Right ventricle myocardium superior (tissue), 1 donor: ENCODE measurements at regions of chr19 and their contacts with region 1.

Region 1: DNA sequence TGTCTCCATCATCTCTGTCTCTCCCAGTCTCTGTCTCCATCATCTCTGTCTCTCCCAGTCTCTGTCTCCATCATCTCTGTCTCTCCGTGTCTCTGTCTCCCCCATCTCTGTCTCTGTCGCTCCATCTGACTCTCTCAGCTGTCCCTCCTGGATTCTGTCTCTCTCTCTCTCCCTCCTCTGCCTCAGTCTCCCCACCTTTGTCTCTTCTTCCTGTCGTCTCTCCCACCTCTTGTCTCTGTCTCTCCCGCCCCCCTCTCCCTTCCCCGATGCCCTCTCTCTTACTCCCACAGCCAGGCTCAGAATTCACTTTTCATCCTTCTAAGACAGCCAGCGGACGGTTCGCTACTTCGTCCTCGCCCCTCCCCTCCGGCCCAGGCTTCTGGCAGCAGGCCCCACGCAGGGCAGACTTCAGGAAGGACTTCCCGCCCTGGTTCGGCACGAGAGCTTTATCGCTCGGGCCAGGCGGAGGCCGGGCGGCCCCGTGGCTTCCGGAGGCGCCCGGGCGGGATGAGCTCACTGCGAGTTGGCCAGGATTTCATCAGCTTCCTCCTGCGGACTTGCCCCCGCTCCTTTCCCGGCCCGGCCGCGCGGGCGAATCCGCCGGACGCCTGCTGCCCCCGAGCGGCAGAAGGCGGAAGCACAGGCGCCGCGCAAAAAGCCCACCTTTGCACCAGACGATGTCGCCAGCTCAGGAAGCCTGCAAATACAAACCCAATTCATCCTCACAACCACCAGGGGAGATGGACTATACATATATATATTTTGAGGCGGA is 12.4 kb upstream of the CCDC9 start:
- DNase-seq: peak; percentile 94
- ATAC-seq: peak; percentile 95

Region 2: DNA sequence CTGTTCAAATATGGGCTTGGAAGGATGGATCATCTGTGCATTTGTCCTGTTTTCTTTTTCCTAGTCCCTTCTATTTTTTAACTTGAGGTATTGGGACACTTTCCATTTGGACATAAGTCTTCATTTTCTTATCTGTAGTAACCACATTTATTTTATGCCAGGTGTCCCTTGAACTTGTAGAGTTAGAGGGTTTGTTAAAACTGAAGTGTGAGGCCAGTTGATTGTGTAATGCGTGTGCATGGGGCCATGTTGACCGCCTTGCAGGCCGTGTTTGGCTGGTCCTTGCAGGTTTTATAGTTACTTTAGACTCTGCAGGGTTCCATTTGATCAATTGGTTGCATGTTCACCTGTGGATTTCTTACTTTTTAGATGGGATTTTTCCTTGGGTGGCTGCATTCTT is 92.3 kb before region 1 on chr19:
- intact Hi-C with region 1: loop called (anchors 2 kb)
- DNase-seq: no peak
- ATAC-seq: no peak

Region 3: GRCh38 chr19:47190167-47190727 is 53.7 kb before region 1 on chr19:
- intact Hi-C with region 1: loop called (anchors 10 kb)
- DNase-seq: peak; percentile 55
- ATAC-seq: peak; percentile 54

Region 4: GRCh38 chr19:47210689-47211316 is 33.2 kb before region 1 on chr19:
- intact Hi-C with region 1: loop called (anchors 2 kb)
- DNase-seq: peak; percentile 67
- ATAC-seq: peak; percentile 85